ENCODE measurements at regions of chr10 and their contacts with region 1.

Region 1: DNA sequence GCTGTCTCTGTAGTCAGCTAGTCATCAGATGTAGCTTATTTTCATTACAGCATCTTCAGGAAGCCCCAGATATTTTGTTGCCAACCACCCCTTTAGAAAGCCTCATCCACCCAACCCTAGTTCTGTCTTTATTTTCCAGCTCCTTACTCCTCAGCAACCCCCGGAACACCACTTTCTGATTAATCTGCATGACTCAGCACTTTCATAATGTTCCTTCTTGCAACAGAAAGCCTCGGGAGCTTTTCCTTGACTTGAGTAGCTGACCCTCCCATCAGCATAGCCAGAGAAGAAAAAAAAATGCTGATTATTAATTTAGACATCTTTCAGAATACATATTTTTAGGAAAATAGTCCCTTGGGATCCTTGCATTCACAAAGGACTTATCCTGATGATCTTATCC is 244.0 kb upstream of the CXCL12 start:
- DNase-seq: no peak
- H3K4me3 Mint-ChIP-seq: peak overlapping the region; percentile 22
- H3K27ac Mint-ChIP-seq: peak overlapping the region; percentile 47
- H3K4me1 Mint-ChIP-seq: no peaks in the 10 kb centered on the region
- H3K27me3 Mint-ChIP-seq: no peaks in the 10 kb centered on the region
- CTCF ChIP-seq: no peak

Region 2: GRCh38 chr10:44569193-44570091 is 59.5 kb before region 1 on chr10:
- CTCF ChIA-PET with region 1: no interaction called
- intact Hi-C with region 1: loop called (anchors 10 kb)
- DNase-seq: no peak
- H3K4me3 Mint-ChIP-seq: no peak overlapping the region
- H3K27ac Mint-ChIP-seq: no peak overlapping the region
- H3K4me1 Mint-ChIP-seq: no peaks in the 10 kb centered on the region
- H3K27me3 Mint-ChIP-seq: peaks cover 88% of the 10 kb centered on the region
- CTCF ChIP-seq: no peak

Measured in Calu3 (cell line).